Panc1 (cell line): ENCODE measurements at regions of chr3 and their contacts with region 1.

Region 1: DNA sequence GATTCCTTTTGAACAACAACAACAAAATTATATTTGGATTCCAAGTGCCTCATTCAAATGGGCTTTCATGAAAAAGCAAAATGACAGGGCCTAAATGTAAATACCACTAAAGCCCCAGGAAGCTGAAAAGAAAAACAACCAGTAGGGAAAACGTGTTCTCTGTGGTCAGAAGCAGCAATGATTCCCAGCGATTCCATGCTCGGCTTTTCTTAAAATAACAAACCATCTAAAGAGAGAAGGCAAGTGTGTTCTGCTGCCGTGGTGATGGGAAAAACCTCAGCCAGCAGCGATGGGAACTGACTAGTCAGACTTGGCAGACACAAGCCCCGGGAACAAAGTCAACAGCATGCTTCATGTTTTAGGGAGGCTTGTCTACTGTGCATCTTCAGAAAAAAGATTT is 153.6 kb downstream of the TNIK start:
- DNase-seq: no peak
- ATAC-seq: 0 out of 2 replicates have a peak, but pooled peaks have one; percentile 34
- H3K4me3 ChIP-seq: no peak overlapping the region
- H3K27ac ChIP-seq: no peak overlapping the region
- H3K4me1 ChIP-seq: no peaks in the 10 kb centered on the region
- H3K27me3 ChIP-seq: peaks cover 3% of the 10 kb centered on the region; the same call in 1 of the 2 replicates
- CTCF ChIP-seq: no peak

Region 2: DNA sequence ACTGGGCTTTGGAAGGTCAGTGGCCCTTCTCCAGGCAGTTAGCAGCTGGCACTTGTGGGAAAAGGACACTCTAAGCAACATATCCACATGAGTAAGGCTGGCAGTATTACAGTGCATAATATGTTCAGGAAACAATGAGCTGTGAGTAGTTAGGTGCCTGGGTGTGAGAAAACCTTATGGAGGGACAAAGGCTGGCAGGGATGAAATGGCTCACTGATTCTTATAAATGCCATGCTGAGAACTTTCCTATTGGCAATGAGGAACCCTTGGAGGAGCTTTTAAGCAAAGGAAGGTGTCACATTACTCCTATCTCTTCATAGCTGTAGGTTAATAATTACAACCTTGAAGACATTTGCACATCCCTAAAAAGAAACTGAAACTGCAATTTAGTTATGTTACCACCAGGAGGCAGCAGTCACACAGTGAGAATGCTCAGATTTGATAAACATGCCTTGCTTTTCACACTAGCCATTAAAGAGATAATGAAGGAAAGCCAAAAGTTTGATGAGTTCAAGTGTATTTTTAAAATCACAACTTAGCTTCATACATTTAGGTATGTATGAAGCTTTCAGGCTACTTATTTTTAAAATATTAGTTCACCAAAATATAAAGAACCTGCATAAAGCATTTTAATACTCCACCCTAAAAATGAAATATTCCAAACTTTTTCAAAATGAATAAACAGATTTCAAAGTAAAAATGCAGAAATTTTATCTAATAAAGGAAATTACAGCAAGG is 143.5 kb before region 1 on chr3:
- CTCF ChIA-PET with region 1: no interaction called
- POLR2A ChIA-PET with region 1: no interaction called
- in situ Hi-C with region 1: no loop called
- intact Hi-C with region 1: no loop called
- DNase-seq: no peak
- ATAC-seq: no peak
- H3K4me3 ChIP-seq: no peak overlapping the region
- H3K27ac ChIP-seq: no peak overlapping the region
- H3K4me1 ChIP-seq: no peaks in the 10 kb centered on the region
- H3K27me3 ChIP-seq: no peaks in the 10 kb centered on the region
- CTCF ChIP-seq: peak; percentile 76

Region 3: GRCh38 chr3:171498921-171499320 is 192.3 kb after region 1 on chr3:
- CTCF ChIA-PET with region 1: no interaction called
- POLR2A ChIA-PET with region 1: interaction called, 14 read pairs
- in situ Hi-C with region 1: no loop called
- intact Hi-C with region 1: no loop called
- DNase-seq: no peak
- ATAC-seq: no peak
- H3K4me3 ChIP-seq: no peak overlapping the region
- H3K27ac ChIP-seq: no peak overlapping the region
- H3K4me1 ChIP-seq: no peaks in the 10 kb centered on the region
- H3K27me3 ChIP-seq: no peaks in the 10 kb centered on the region
- CTCF ChIP-seq: no peak

Region 4: DNA sequence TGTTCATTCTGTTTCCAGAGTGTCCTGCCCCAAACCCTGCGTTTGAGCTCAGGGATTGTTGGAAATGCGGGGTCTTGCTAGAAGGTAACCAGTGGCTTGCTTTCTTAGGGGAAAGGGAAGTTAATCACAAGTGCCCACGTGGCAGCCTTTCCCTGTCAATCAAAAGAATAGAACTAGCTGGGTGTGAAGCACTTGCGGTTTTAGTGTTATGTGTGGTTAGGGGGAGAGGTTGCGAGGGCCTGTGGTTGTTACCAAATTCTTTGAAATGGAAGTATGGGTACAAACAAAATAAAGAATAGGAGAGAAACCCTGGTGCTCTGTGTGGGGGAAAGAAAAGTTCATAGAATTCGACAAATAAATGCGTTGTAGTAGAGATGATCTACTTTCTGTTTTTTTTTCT is 800.4 kb after region 1 on chr3:
- CTCF ChIA-PET with region 1: no interaction called
- POLR2A ChIA-PET with region 1: no interaction called
- in situ Hi-C with region 1: no loop called
- intact Hi-C with region 1: no loop called
- DNase-seq: no peak
- ATAC-seq: no peak
- H3K4me3 ChIP-seq: no peak overlapping the region
- H3K27ac ChIP-seq: peak overlapping the region; percentile 29
- H3K4me1 ChIP-seq: peaks cover 58% of the 10 kb centered on the region
- H3K27me3 ChIP-seq: no peaks in the 10 kb centered on the region
- CTCF ChIP-seq: no peak